Aorta (tissue), 5 donors: ENCODE measurements at regions of chr4 and their contacts with region 1.

Region 1: DNA sequence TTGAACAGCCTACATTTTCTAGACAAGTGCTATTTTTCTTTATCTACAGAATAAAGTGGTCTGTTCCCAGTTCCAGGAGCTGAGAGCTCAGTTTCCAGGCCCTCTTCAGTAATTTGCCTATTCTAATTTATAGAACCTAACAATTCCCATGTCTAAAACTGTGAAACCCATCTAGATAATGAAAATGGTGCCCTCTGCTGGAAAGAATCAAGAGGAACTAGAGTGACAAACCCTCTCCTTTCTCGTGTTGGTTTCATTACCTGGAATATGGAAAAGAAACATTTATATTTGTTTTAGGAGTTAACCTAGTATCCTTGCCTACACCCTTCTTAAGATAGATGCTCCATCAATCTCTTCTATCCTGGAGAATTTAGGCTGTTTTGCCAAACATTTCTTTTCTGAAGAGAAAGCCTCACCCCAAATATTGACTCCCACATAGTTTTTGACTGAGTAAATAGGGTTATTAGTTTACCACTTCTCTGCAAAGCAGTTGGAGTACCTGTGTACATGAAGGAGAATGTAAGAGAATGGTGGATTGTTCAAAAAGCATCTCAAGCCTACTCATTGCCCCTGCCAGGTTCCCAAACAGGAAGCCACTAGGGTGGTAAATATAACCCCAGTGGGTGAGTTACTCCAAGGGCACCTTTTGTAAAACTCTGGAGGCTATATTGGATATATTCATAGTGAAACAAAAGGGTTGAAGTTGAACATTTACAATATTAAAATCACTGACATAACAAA is 121.6 kb downstream of the RASL11B start:
- DNase-seq: no peak
- ATAC-seq: peak; percentile 80
- H3K4me3 ChIP-seq: no peak overlapping the region
- H3K27ac ChIP-seq: no peak overlapping the region
- H3K4me1 ChIP-seq: no peaks in the 10 kb centered on the region
- H3K27me3 ChIP-seq: no peaks in the 10 kb centered on the region

Region 2: GRCh38 chr4:52234561-52235440 is 748.9 kb before region 1 on chr4:
- intact Hi-C with region 1: loop called (anchors 2 to 5 kb)
- DNase-seq: no peak
- ATAC-seq: peak; percentile 84
- H3K4me3 ChIP-seq: peak overlapping the region in 1 of 2 donors; percentile 41
- H3K27ac ChIP-seq: no peak overlapping the region
- H3K4me1 ChIP-seq: no peaks in the 10 kb centered on the region
- H3K27me3 ChIP-seq: no peaks in the 10 kb centered on the region

Region 3: DNA sequence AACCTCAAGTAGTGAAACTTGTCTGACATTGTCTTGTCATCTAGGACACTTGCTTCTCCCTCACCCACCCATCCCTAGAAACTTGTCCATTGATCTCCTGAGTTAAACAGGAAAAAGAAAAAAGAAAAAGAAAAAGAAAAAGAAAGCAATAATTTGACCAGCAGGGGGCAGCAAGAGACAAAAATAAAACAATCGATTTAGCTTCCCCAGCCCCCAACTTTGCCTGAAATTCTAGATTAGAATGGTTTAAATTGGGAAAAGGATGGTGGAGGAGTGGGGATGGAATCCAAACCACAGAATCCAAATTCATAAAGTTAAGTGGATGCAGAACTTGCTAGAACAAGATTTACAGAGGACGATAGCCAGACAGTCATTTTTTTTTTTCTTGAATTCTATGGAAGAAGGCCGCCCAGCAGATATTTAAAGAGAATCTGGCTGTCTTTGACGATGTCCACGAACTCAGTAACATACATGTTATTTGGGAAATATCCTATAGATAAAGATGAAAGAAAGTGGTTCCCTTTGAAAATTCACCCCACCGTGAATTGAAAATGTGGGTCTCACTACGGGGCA is 607.5 kb before region 1 on chr4:
- intact Hi-C with region 1: loop called (anchors 2 kb)
- DNase-seq: no peak
- ATAC-seq: no peak
- H3K4me3 ChIP-seq: no peak overlapping the region
- H3K27ac ChIP-seq: no peak overlapping the region
- H3K4me1 ChIP-seq: no peaks in the 10 kb centered on the region
- H3K27me3 ChIP-seq: no peaks in the 10 kb centered on the region

Region 4: GRCh38 chr4:52712172-52712990 is 271.4 kb before region 1 on chr4:
- intact Hi-C with region 1: loop called in 1 of 2 experiments (anchors 5 kb)
- DNase-seq: peak; percentile 99
- ATAC-seq: peak; percentile 99
- H3K4me3 ChIP-seq: peak overlapping the region; percentile 78 to 82
- H3K27ac ChIP-seq: peak overlapping the region; percentile 88 to 89
- H3K4me1 ChIP-seq: peaks cover 0 to 3% of the 10 kb centered on the region in 2 donors
- H3K27me3 ChIP-seq: no peaks in the 10 kb centered on the region

Region 5: GRCh38 chr4:52861879-52862616 is 121.7 kb before region 1 on chr4 and contains the start of gene RASL11B:
- intact Hi-C with region 1: loop called in 1 of 2 experiments (anchors 5 kb)
- DNase-seq: peak; percentile 89 to 94
- ATAC-seq: peak; percentile 97
- H3K4me3 ChIP-seq: peak within 1 kb of the TSS; percentile 71 to 75
- H3K27ac ChIP-seq: peak within 1 kb of the TSS; percentile 11 to 78
- H3K4me1 ChIP-seq: peaks cover 0 to 2% of the 10 kb centered on the region in 2 donors
- H3K27me3 ChIP-seq: no peaks in the 10 kb centered on the region
- total RNA-seq, gene RASL11B: 5.6 to 5.7 TPM

Region 6: DNA sequence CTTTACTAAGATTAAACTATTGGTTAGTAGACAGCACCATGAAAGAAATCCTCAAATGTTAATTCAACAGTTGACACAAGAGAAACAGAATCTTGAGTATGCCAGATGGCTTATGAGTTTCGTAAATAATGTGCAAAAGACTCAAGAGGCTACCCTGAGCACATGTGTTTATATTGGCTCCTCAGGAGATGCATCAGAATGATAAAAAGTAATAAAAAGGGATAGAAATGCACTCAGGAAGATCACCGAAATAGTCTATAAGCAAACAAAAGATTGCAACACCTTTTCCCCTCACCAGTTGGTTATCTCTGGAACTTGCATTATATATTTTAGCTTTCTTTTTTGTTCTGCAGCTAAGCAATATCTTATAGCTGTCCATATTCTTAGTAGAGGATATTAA is 297.7 kb after region 1 on chr4:
- intact Hi-C with region 1: no loop called
- DNase-seq: no peak
- ATAC-seq: no peak
- H3K4me3 ChIP-seq: no peak overlapping the region
- H3K27ac ChIP-seq: no peak overlapping the region
- H3K4me1 ChIP-seq: no peaks in the 10 kb centered on the region
- H3K27me3 ChIP-seq: no peaks in the 10 kb centered on the region